Colonic mucosa (tissue), 4 donors: ENCODE measurements at regions of chr12 and their contacts with region 1.

Region 1: DNA sequence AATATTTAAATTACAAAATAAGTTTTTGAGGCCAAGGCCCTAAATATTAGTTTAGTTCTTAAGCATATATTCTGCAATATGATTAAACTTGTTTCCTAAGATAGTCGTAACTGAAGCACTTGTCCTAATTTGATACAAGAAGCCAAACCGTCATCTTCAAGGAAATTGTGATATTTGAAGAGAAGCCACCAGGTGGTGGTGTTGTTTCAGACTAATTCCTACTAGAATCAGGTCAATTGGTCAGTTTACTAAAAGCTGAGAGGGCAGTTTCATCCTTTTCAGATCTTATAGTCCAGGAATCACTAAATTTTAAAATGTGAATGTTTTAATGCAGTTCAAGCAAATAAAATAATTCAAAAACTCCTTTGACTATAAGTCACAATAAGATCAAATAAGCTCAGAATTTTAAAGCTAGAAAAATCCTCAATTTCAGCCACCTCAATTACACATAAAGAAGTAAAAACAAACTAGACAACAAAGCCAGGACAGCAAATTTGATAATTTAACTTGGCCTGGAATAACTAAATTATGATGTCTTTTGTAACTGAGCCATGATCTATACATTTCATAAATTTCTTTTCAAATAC is 7.1 kb upstream of the ARL1 start:
- DNase-seq: peak; percentile 59
- H3K4me3 ChIP-seq: no peak overlapping the region
- H3K27ac ChIP-seq: no peak overlapping the region
- H3K4me1 ChIP-seq: no peaks in the 10 kb centered on the region
- H3K27me3 ChIP-seq: no peaks in the 10 kb centered on the region
- CTCF ChIP-seq: peak; percentile 56

Region 2: DNA sequence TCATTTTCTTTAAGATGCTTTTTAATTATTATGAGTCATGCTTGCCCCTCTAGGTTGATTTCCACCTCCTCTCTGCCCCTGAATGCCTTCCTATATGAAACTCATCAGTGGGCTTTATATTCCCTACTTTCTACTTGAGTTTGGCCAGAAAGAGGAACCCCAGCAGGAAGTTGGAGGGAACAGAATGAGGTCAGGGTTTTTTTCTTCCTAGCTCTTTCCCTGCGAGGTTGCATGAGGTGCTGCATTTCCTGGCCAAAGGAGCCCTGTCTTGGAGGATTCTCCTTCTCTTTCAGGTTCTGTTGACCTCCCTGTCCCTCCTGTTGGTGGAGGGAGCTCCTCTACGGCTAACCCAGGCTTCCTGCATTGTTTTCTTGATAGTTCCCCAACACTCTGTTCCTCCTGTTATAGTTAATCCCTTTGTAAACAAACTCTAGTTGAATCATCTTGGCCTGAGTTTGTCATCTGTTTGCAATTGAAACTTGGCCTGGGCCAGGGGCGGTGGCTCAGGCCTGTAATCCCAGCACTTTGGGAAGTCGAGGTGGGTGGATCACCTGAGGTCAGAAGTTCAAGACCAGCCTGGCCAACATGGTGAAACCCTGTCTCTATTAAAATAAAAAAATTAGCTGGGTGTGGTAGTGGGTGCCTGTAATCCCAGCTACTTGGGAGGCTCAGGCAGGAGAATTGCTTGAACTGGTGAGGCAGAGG is 45.2 kb after region 1 on chr12:
- intact Hi-C with region 1: no loop called
- DNase-seq: peak; percentile 29
- H3K4me3 ChIP-seq: no peak overlapping the region
- H3K27ac ChIP-seq: no peak overlapping the region
- H3K4me1 ChIP-seq: peaks cover 5% of the 10 kb centered on the region
- H3K27me3 ChIP-seq: no peaks in the 10 kb centered on the region
- CTCF ChIP-seq: no peak

Region 3: DNA sequence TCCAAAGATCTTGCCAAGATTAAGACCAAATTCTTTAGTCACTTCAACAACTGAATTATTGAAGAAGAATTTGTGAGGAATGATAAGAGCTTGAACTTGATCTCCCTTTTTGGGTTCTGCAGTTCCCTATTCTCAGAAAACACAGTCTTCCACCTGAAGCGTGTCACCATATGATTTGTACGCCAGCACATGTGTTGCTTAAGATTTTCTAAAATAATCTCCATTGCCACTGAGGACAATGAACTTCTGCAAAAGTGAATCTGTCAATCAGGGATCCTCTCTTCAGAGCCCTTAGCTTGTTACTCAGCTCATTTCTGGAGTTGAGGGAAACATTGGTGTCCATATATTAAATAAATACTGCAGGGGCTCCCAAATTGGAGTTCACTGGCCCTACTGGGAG is 56.3 kb after region 1 on chr12:
- intact Hi-C with region 1: no loop called
- DNase-seq: no peak
- H3K4me3 ChIP-seq: no peak overlapping the region
- H3K27ac ChIP-seq: no peak overlapping the region
- H3K4me1 ChIP-seq: no peaks in the 10 kb centered on the region
- H3K27me3 ChIP-seq: no peaks in the 10 kb centered on the region
- CTCF ChIP-seq: no peak

Region 4: GRCh38 chr12:101839324-101840283 is 425.0 kb after region 1 on chr12:
- intact Hi-C with region 1: loop called (anchors 5 kb)
- DNase-seq: peak; percentile 87
- H3K4me3 ChIP-seq: no peak overlapping the region
- H3K27ac ChIP-seq: no peak overlapping the region
- H3K4me1 ChIP-seq: no peaks in the 10 kb centered on the region
- H3K27me3 ChIP-seq: no peaks in the 10 kb centered on the region
- CTCF ChIP-seq: peak; percentile 84